ENCODE measurements at regions of chr3 and their contacts with region 1.

Region 1: GRCh38 chr3:32733631-32734229 is 48.7 kb downstream of the CNOT10 start:
- DNase-seq: no peak

Region 2: DNA sequence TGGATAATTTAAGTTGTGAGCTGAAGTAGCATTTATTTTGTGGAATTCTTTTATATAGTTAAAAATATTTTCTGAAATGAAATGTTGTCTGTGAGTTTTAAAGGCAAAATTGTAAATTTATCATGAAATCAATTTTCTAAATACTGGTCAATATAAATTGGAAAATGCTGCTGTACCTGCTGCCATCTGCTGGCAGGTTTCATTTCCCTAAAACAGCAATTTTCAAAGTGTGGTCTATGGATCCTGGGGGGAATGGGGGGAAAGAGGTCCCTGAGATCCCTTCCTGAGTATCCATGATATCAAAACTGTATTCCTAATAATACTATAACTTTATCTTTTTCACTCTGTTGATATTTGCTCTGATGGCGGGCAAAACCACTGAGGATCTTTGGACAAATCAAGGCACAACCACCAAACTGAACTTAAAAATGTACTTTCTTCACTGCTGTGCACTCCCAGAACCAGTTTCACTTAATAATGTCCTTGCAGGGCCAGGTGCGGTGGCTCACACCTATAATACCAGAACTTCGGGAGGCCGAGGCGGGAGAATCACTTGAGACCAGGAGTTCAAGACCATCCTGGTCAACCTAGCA is 200.5 kb after region 1 on chr3:
- intact Hi-C with region 1: loop called (anchors 5 kb)
- DNase-seq: peak; percentile 29